GM10248 (cell line): ENCODE measurements at regions of chr6 and their contacts with region 1.

Region 1: GRCh38 chr6:128641701-128642100 is 121.3 kb upstream of the PTPRK start:
- DNase-seq: no peak
- CTCF ChIP-seq: no peak

Region 2: GRCh38 chr6:128950864-128951263 is 309.2 kb after region 1 on chr6:
- CTCF ChIA-PET with region 1: no interaction called
- POLR2A ChIA-PET with region 1: interaction called, 10 read pairs
- DNase-seq: no peak
- CTCF ChIP-seq: no peak